ENCODE measurements at regions of chr4 and their contacts with region 1.

Region 1: DNA sequence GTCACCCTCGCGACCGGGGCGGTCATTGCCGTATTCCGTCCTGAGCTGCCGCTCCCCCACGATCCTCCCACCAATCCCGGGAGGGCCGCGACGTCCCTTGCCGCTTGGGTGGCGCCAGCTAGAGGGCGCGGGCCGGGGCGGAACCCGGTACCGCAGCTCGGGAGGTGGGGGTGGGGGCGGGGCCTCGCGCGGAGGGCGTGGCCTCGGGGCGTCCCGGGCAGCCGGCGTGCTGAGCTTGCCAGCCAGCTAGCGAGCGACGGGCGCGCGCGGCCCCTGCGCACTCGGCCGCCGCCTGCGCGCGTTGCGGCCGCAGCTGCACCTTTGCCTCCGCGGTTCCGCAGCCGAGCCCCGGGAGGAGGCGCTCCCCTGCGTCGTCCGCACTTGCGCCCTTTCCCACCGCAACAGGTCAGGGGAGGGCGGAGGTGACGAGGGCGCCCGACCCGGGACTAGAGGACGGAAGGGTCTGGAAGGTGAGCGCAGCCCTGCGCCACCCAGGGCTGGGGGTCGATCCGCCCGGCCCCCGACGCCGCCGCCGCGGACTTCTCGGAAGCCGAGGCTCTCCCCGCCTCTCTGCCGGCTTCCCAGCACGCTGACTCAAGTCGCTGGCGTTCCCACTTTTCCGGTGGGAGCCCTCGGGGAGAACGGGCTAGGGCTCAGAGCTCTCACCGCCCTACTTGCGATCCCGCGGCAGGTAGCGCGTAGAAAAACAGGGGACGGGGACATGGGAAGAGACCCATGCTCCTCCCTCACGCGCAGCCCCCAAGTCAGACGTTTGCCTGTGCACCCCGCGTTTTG is at the start of gene AFF1:
- DNase-seq: no peak
- H3K4me3 ChIP-seq: peak within 1 kb of the TSS; percentile 96
- H3K27me3 ChIP-seq: no peaks in the 10 kb centered on the region
- CTCF ChIP-seq: peak; percentile 40; the same call in 1 of the 2 replicates
- polyA plus RNA-seq, gene AFF1: 7.5 and 11.0 TPM in 2 replicates

Region 2: DNA sequence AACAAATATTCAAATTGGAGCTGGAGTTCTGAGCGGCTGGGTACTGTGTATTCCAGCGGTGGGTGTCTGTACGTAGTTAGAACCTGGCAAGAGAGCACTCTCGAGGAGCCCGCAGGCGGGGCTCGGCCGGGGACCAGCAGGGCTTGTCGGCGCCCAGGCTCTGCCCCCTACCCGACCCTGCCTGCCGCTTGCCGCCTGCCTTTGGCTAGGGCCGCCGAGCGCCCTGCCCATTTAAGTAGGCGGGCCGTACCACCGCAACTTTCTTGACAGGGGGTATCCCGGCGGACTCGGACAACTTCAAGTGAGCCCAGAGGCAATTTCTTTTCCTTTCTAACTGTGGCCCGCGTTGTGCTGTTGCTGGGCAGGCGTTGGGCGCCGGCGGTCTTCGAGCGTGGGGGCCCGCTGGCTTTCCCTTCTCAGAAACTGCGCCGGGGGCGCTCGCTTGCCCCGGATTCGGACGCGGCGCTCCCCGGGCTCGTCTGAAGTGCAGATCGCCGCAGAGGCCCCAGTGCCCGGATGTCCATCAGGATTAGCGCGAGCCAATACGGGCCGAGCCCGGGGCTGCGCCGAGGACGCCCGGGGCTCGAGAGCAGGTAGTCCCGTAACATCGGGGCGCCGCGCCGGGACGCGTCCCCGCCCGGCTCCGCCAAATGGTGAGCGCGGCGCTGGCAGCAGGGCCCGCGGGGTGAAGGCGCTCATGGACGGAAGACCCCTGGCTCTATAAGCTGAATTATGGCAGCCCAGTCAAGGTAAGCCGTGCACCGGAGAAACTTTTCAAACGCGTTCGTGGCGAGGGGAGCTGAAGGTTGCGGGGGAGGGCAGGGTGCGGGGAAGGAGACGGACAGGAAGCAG is 71.9 kb after region 1 on chr4:
- CTCF ChIA-PET with region 1: interaction called, 10 read pairs
- POLR2A ChIA-PET with region 1: interaction called, 4 read pairs
- DNase-seq: peak; percentile 38
- H3K4me3 ChIP-seq: peak overlapping the region; percentile 73
- H3K27me3 ChIP-seq: no peaks in the 10 kb centered on the region
- CTCF ChIP-seq: no peak

Region 3: GRCh38 chr4:87166296-87166854 is 231.4 kb after region 1 on chr4:
- CTCF ChIA-PET with region 1: no interaction called
- POLR2A ChIA-PET with region 1: no interaction called
- DNase-seq: no peak
- H3K4me3 ChIP-seq: no peak overlapping the region
- H3K27me3 ChIP-seq: no peaks in the 10 kb centered on the region
- CTCF ChIP-seq: no peak

Region 4: GRCh38 chr4:87390891-87391575 is 456.1 kb after region 1 on chr4 and contains the start of gene HSD17B11:
- CTCF ChIA-PET with region 1: no interaction called
- POLR2A ChIA-PET with region 1: interaction called, 11 read pairs
- DNase-seq: peak; percentile 68
- H3K4me3 ChIP-seq: peak within 1 kb of the TSS; percentile 43
- H3K27me3 ChIP-seq: no peaks in the 10 kb centered on the region
- CTCF ChIP-seq: peak; percentile 24; the same call in 1 of the 2 replicates
- polyA plus RNA-seq, gene HSD17B11: 11.2 and 30.8 TPM in 2 replicates